GM13977 (cell line): ENCODE measurements at regions of chr12 and their contacts with region 1.

Region 1: DNA sequence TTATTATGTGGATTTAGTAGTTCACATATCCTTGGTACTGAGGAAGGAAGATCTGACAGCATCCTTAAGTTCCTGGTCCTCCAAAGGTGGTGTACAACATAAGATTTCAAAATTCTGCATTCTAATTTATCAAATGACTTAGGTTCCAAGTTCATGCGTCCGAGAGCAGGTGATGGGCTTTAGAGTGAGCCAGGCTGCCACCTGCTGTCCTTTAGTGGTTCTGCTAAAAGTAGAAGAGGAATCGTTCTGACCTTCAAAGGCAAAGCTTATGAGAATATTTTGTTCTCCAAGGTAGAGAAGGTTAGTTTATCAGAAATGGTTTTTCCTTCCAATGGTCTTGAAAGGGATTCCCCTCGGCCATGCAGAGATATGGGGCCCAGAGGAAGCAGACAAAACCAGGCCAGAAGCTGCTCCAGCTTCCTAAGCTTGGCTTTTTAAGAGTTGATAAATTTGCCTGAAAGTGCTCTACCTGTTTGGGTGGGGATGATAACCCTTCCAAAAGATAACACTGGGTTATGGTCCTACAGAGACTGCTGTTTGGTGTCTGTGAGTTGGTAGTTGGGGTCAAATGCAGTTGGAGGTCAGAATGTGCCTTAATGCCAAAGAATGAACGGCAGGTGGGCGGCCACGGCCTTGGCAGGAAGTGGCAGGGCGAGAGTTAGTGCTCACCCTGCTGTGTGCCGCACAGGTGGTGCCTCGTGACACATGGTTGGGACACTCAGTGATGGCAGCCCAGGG is 29.1 kb upstream of the LRTM2 start:
- DNase-seq: peak; percentile 74
- CTCF ChIP-seq: peak; percentile 80

Region 2: GRCh38 chr12:1644534-1645438 is 146.5 kb before region 1 on chr12:
- in situ Hi-C with region 1: loop called (anchors 5 kb)
- DNase-seq: no peak
- CTCF ChIP-seq: no peak

Region 3: DNA sequence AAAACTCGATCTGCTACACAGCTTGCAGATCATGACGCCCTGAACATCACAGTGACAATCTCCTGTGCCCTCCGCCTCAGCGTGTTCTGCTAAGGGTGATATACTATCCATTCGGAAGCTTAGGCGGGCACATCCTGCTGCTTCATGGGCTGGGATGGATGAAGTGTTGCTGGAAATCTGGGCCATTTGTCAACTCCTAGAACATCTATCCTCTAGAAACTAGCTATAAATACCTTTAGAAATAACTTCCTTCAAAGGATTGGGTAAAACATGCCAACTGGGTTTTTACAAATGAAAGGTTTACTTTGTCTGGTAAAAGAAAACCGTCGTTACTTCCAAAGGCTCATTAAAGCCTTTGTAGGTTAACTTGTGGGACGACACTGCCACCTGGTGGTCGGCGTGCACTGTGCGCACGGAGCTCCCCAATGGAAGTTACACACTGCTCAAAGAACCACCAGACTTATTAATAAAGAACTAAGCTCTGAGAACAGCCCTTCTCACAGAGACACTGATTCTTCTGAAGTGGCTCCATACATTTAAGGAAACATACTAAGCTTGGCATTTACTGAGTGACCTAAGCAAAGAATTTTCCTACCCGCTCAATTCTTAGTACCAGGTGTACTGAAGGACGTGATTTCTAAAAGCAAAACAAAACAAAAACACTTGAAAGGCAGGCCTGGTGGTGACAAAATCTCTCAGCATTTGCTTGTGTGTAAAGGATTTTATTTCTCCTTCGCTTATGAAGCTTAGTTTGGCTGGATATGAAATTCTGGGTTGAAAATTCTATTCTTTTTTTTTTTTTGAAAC is 148.7 kb after region 1 on chr12:
- in situ Hi-C with region 1: loop called (anchors 5 kb)
- DNase-seq: peak; percentile 85
- CTCF ChIP-seq: peak; percentile 93